Tibial artery (tissue), 4 donors: ENCODE measurements at regions of chr18 and their contacts with region 1.

Region 1: GRCh38 chr18:35491700-35492077 is 6.1 kb downstream of the INO80C start:
- DNase-seq: no peak
- H3K4me3 ChIP-seq: no peak overlapping the region
- H3K27ac ChIP-seq: no peak overlapping the region
- H3K4me1 ChIP-seq: peaks cover 0 to 13% (median 4%) of the 10 kb centered on the region in 4 donors
- H3K27me3 ChIP-seq: no peaks in the 10 kb centered on the region
- CTCF ChIP-seq: no peak

Region 2: DNA sequence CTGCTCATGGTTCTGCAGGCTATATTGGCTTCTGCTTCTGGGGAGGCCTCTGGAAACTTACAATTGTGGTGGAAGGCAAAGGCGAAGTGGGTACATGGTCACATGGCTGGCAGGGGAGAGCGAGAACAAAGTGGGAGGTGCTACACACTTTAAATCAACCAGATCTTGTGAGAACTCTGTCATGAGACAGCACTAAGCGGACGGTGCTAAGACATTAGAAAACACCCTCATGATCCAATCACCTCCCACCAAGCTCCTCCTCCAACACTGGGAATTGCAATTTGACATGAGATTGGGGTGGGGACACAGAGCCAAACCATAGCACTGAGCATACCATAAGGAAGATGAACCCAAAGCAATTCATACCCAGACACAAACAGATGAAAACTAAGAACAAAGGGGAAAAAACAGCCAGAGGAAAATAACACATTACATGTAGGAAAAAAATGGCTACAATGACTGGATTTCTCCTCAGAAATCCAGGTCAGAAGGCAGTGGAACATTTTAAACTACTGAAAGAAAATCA is 37.1 kb after region 1 on chr18:
- intact Hi-C with region 1: loop called (anchors 2 kb)
- DNase-seq: no peak
- H3K4me3 ChIP-seq: no peak overlapping the region
- H3K27ac ChIP-seq: no peak overlapping the region
- H3K4me1 ChIP-seq: peaks cover 0 to 25% (median 12%) of the 10 kb centered on the region in 4 donors
- H3K27me3 ChIP-seq: no peaks in the 10 kb centered on the region
- CTCF ChIP-seq: no peak

Region 3: GRCh38 chr18:35642802-35643201 is 151.1 kb after region 1 on chr18:
- intact Hi-C with region 1: no loop called
- DNase-seq: no peak
- H3K4me3 ChIP-seq: no peak overlapping the region
- H3K27ac ChIP-seq: no peak overlapping the region
- H3K4me1 ChIP-seq: no peaks in the 10 kb centered on the region
- H3K27me3 ChIP-seq: no peaks in the 10 kb centered on the region
- CTCF ChIP-seq: no peak